Activated naive CD4-positive, alpha-beta T cell treated with anti-CD3 and anti-CD28 coated beads, Interleukin-2, amount 10 ng/mL, durations not matched to agents 7 days and 5 days (primary cell): ENCODE measurements at regions of chr2 and their contacts with region 1.

Region 1: DNA sequence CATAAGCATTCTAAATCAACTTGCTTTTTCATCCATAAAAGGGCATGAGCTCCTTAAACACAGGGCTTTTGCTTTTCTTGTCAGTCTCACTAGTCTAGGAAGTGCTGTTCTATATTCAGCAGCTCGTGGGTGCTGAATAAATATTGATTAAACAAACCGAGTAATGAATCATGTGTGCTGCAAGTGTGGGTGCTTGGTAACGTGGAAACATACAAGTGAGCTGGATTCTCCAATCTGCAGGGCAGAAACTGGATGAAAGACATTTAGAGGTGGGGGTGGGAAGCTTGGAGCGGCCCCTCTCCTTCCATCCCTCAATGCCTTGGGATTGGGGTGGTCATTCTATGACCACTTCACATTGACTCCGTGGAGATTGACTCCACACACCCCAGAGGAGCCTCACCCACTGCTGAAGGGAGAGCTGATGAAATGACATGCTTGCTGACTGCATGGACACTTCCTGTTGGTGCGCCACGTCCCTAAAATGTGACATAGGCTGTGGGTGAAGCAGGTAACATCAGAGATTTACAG is 114.6 kb downstream of the DOCK10 start:
- DNase-seq: peak; percentile 81
- H3K4me3 Mint-ChIP-seq: peak overlapping the region; percentile 48
- H3K27ac Mint-ChIP-seq: peak overlapping the region; percentile 94
- H3K4me1 Mint-ChIP-seq: peaks cover 98% of the 10 kb centered on the region
- H3K27me3 Mint-ChIP-seq: no peaks in the 10 kb centered on the region

Region 2: DNA sequence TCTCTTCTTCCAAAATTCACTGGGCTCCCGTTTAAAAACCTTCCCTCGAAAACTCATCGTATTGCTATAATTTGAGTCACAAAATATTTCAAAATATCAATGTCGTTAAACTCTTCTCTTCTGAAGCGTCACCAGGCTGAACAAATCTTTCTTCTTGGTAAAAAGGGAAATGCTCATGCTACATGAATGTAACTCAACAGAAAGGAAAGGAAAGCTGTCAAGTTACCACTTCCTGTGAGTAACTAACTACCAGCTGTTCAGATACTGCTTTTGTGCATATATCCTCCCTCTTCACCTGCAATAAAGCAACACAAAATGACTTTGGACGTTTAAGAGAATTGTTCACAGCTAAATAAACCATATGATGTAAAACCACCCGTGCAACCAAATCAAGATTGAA is 19.2 kb after region 1 on chr2:
- CTCF ChIA-PET with region 1: interaction called, 16 read pairs
- DNase-seq: no peak
- H3K4me3 Mint-ChIP-seq: peak overlapping the region; percentile 88
- H3K27ac Mint-ChIP-seq: peak overlapping the region; percentile 93
- H3K4me1 Mint-ChIP-seq: peaks cover 78% of the 10 kb centered on the region
- H3K27me3 Mint-ChIP-seq: no peaks in the 10 kb centered on the region